ENCODE measurements at regions of chr2 and their contacts with region 1.

Region 1: GRCh38 chr2:210233487-210233886 is 8.2 kb upstream of the ACADL start:
- DNase-seq: peak; percentile 83
- H3K4me3 ChIP-seq: no peak overlapping the region
- H3K27ac ChIP-seq: peak overlapping the region; percentile 40 to 73
- H3K4me1 ChIP-seq: peaks cover 9% of the 10 kb centered on the region
- H3K27me3 ChIP-seq: no peaks in the 10 kb centered on the region
- CTCF ChIP-seq: peak; percentile 26 to 54 (median 29)
- POLR2A ChIP-seq: no peak

Region 2: GRCh38 chr2:210328666-210329065 is 95.2 kb after region 1 on chr2:
- intact Hi-C with region 1: no loop called
- DNase-seq: no peak
- H3K4me3 ChIP-seq: no peak overlapping the region
- H3K27ac ChIP-seq: no peak overlapping the region
- H3K4me1 ChIP-seq: no peaks in the 10 kb centered on the region
- H3K27me3 ChIP-seq: no peaks in the 10 kb centered on the region
- CTCF ChIP-seq: no peak
- POLR2A ChIP-seq: no peak

Region 3: DNA sequence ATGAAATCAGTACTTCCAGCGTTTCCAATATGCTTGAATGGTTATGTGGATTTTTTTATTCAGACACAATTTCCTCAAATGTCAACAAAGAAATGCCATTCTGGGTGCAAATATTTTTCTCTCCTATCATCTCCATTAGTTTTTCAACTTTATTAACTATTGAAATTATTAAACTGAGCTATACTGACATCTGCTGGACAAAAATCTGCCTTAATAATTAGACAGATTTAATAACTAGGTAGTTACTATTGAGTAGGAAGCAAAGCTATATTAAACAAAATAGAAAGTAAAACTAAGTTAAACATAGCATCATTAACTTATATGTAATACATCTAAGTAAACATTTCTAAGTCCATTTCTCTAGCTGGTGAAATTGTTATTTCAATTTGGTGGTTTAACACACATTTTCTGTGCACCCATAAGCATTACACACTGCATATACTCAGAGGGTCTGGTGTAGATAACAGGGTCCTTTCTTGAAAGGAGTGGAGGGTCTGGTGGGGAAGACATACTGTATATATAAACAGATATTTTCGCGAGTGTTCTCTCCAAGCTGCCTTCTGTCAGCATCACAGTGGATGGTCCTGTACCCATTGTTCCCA is 166.1 kb after region 1 on chr2:
- intact Hi-C with region 1: loop called (anchors 10 kb)
- DNase-seq: no peak
- H3K4me3 ChIP-seq: no peak overlapping the region
- H3K27ac ChIP-seq: no peak overlapping the region
- H3K4me1 ChIP-seq: no peaks in the 10 kb centered on the region
- H3K27me3 ChIP-seq: no peaks in the 10 kb centered on the region
- CTCF ChIP-seq: peak in 1 of 3 experiments; percentile 47
- POLR2A ChIP-seq: no peak

Region 4: GRCh38 chr2:210496512-210496911 is 263.0 kb after region 1 on chr2:
- intact Hi-C with region 1: no loop called
- DNase-seq: no peak
- H3K4me3 ChIP-seq: no peak overlapping the region
- H3K27ac ChIP-seq: no peak overlapping the region
- H3K4me1 ChIP-seq: no peaks in the 10 kb centered on the region
- H3K27me3 ChIP-seq: no peaks in the 10 kb centered on the region
- CTCF ChIP-seq: no peak
- POLR2A ChIP-seq: no peak